Sigmoid colon (tissue), 7 donors: ENCODE measurements at regions of chr1 and their contacts with region 1.

Region 1: GRCh38 chr1:248837794-248838356 is at the start of gene ZNF672:
- DNase-seq: peak; percentile 100
- H3K4me3 ChIP-seq: peak within 1 kb of the TSS; percentile 87 to 96 (median 93)
- H3K27ac ChIP-seq: peak within 1 kb of the TSS; percentile 99 to 100 (median 100)
- H3K4me1 ChIP-seq: peaks cover 0 to 46% (median 44%) of the 10 kb centered on the region in 4 donors
- H3K27me3 ChIP-seq: no peaks in the 10 kb centered on the region
- CTCF ChIP-seq: no peak
- EP300 ChIP-seq: no peak
- POLR2A ChIP-seq: peak in 1 of 2 donors; percentile 71
- total RNA-seq, gene ZNF672: 17.5 to 31.1 (median 22.5) TPM

Region 2: DNA sequence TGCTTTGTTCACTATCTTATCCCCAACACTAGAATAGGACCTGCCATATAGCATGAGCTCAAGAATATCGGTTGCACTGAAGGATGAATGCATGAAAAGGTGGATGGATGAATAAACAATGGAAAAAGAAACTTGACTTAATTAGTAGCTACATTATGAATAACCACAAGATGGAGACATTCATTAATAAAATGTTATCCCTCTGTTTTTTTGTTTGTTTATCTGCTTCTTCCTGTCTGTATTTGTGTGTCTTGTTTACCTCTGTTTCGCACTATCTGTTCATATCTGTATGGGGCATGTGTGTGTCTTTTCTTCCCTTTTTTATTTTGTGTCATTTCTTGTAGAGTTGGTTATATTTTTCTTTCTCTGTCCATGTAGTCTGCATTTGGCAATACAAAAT is 134.2 kb before region 1 on chr1:
- intact Hi-C with region 1: no loop called
- DNase-seq: no peak
- H3K4me3 ChIP-seq: no peak overlapping the region
- H3K27ac ChIP-seq: no peak overlapping the region
- H3K4me1 ChIP-seq: no peaks in the 10 kb centered on the region
- H3K27me3 ChIP-seq: no peaks in the 10 kb centered on the region
- CTCF ChIP-seq: no peak
- EP300 ChIP-seq: no peak
- POLR2A ChIP-seq: no peak

Region 3: DNA sequence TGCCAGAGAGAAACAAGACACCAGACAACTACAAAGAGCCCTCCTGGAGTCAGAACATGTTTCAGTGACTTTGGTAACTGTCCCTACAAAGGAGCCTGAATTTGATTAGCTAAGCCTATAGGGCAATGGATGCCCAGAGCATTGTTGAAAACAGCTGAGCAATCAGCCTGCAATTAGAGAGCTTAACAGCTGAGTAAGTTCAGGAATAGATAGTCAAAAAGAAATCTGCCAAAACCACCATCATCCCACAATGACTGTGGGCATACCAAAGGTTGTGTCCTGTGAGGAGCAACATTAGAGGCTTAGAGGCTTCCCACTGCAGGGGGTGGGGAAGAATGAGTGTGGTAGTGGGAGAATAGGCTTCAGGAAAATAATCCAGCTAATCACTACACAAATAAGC is 44.3 kb before region 1 on chr1:
- intact Hi-C with region 1: no loop called
- DNase-seq: no peak
- H3K4me3 ChIP-seq: no peak overlapping the region
- H3K27ac ChIP-seq: no peak overlapping the region
- H3K4me1 ChIP-seq: no peaks in the 10 kb centered on the region
- H3K27me3 ChIP-seq: no peaks in the 10 kb centered on the region
- CTCF ChIP-seq: no peak
- EP300 ChIP-seq: no peak
- POLR2A ChIP-seq: no peak

Region 4: DNA sequence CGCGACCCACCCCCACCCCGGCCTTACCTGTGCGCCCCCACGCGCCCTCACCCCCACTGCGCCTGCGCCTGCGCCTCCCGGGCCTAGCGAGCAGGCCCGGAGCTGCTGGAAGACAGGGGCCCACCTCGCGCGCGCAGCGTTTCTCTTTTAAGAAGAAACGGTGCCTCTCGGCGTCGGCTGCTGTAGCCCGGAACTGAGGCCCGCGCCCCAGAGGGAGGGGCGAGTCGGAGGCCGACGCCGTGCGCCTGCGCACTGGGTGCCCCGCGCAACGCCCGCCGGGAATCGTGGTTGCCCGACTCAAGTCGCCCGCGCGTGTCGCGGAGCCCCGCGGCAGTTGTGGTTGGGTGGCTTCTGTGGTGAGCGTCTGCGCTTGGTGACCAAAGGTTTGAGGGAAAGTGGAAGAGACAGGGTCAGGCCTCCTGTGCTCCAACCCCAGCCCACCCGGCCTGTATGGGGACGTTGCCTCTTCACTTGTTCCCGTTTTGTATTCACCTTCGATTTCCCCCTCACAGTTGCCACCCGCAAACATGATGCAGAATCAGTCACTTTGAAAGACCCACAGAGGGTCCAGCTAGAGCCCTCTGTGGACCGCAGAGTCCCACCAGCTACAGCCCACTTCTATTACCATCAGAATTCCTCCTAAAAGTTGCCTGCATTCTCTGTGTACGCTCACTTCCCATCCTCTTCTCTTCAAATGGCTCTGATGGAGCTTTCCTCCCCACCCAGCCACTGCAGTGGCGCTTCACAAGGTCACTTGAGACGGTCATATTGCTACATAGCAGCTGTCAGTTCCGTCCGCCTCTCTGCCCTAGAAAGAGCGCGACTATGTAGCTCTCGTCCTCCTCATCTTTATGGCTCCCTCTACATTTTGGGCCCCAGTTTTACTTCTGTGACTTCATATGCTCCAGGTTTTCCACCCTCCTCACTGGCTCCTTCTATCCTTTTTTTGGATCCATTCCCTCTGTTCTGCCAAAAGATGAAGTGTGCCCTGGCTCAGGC is 21.3 kb after region 1 on chr1 and contains the start of gene ZNF692:
- intact Hi-C with region 1: loop called (anchors 1 kb)
- DNase-seq: peak; percentile 99
- H3K4me3 ChIP-seq: peak within 1 kb of the TSS; percentile 43 to 61 (median 58)
- H3K27ac ChIP-seq: peak within 1 kb of the TSS; percentile 91 to 96 (median 92)
- H3K4me1 ChIP-seq: peaks cover 0 to 43% (median 32%) of the 10 kb centered on the region in 4 donors
- H3K27me3 ChIP-seq: no peaks in the 10 kb centered on the region
- CTCF ChIP-seq: no peak
- EP300 ChIP-seq: no peak
- POLR2A ChIP-seq: peak; percentile 62 to 84
- total RNA-seq, gene ZNF692: 23.5 to 59.8 (median 30.9) TPM

Region 5: GRCh38 chr1:248886237-248886895 is 48.5 kb after region 1 on chr1:
- intact Hi-C with region 1: no loop called
- DNase-seq: no peak
- H3K4me3 ChIP-seq: no peak overlapping the region
- H3K27ac ChIP-seq: no peak overlapping the region
- H3K4me1 ChIP-seq: no peaks in the 10 kb centered on the region
- H3K27me3 ChIP-seq: no peaks in the 10 kb centered on the region
- CTCF ChIP-seq: no peak
- EP300 ChIP-seq: no peak
- POLR2A ChIP-seq: no peak

Region 6: DNA sequence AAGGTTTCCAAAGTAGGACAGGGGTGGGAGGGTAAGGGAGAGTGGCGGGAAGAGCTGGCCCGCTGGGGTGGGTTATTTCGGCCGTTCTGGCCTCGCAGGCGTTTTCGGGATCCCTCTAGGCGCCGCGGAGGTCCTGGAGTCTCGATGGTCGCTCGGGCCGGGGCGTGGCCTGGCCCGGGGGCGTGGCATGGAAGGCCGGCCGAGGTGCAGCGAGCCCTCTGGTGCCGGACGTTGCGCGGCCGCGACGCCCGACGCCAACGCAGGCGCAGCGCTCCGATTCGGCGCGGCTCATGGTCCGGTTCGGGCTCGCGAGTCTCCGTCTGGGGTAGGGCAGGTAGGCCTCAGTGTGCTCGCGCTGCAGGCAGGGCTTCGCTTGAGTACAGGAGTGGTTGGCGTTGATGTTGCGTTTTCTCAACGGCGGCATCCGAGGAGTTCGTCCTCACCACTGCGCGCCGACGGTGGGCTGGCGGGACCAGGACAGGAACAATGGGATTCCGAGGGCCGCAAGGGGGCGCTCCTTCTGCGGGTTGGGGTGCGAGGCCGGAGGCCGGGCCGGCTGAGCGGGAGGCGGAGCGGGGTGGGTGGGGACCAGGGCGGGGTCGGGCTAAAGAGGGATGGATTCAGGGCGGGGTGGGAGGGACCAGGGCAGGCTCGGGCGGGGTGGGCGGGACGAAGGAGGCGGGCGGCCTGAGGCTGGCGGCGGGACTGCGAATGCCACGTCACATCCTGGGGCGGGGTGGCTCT is 68.3 kb after region 1 on chr1 and contains the start of gene PGBD2:
- intact Hi-C with region 1: loop called (anchors 2 kb)
- DNase-seq: peak; percentile 95
- H3K4me3 ChIP-seq: peak within 1 kb of the TSS; percentile 55 to 67 (median 57)
- H3K27ac ChIP-seq: peak within 1 kb of the TSS; percentile 85 to 96 (median 93)
- H3K4me1 ChIP-seq: peaks cover 0 to 15% (median 12%) of the 10 kb centered on the region in 4 donors
- H3K27me3 ChIP-seq: no peaks in the 10 kb centered on the region
- CTCF ChIP-seq: peak; percentile 43 to 48 (median 46)
- EP300 ChIP-seq: no peak
- POLR2A ChIP-seq: peak in 1 of 2 donors; percentile 40
- total RNA-seq, gene PGBD2: 3.3 to 5.4 (median 4.3) TPM